ENCODE measurements at regions of chr19 and their contacts with region 1.

Region 1: GRCh38 chr19:34096020-34096915 is 76.0 kb upstream of the LSM14A start:
- DNase-seq: no peak
- H3K4me3 ChIP-seq: peak overlapping the region in 2 of 4 experiments; percentile 21 to 48; a peak in 5 of 8 replicates
- H3K27ac ChIP-seq: no peak overlapping the region
- H3K4me1 ChIP-seq: no peaks in the 10 kb centered on the region; a peak in 1 of 7 replicates
- H3K27me3 ChIP-seq: no peaks in the 10 kb centered on the region
- CTCF ChIP-seq: peak in 2 of 3 experiments; percentile 53 to 57; a peak in 2 of 4 replicates
- EP300 ChIP-seq: no peak
- POLR2A ChIP-seq: no peak
- RAD21 ChIP-seq: peak; percentile 76 to 80

Region 2: GRCh38 chr19:33785795-33786194 is 310.5 kb before region 1 on chr19:
- CTCF ChIA-PET with region 1: interaction called, 14 read pairs
- POLR2A ChIA-PET with region 1: no interaction called
- DNase-seq: no peak
- H3K4me3 ChIP-seq: no peak overlapping the region
- H3K27ac ChIP-seq: no peak overlapping the region
- H3K4me1 ChIP-seq: no peaks in the 10 kb centered on the region
- H3K27me3 ChIP-seq: peaks cover 0 to 2% (median 0%) of the 10 kb centered on the region in 4 experiments; a peak in 2 of 7 replicates
- CTCF ChIP-seq: no peak
- EP300 ChIP-seq: no peak
- POLR2A ChIP-seq: no peak
- RAD21 ChIP-seq: no peak

Region 3: DNA sequence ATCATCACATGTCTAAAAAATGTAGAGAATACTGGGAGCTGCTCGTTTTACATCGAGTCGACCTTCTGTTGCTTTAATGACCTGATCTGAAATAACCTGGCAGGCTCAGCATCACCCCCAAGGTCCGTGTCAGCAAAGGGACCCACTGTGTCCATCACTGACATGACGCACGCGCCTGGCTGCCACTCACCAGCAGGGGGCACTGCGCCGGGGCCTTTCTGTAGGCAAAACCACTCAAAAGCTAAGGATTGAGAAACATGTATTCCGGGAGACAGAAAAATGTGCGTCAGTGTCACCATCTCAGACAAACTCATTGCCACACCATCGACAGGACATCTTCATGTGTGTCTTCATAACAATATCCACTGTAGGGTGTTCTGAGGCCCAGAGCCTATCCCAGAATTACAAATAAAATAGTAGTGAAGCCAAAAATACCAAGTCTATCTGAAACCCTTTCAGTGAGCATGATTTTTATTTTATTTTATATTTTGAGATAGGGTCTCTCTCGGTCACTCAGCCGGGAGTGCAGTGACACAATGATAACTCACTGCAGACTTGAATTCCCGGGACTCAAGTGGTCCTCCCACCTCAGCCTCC is 54.2 kb before region 1 on chr19:
- CTCF ChIA-PET with region 1: interaction called, 36 read pairs
- POLR2A ChIA-PET with region 1: no interaction called
- DNase-seq: peak; percentile 25 to 95
- H3K4me3 ChIP-seq: no peak overlapping the region
- H3K27ac ChIP-seq: no peak overlapping the region
- H3K4me1 ChIP-seq: no peaks in the 10 kb centered on the region
- H3K27me3 ChIP-seq: no peaks in the 10 kb centered on the region
- CTCF ChIP-seq: peak; percentile 91 to 97 (median 91)
- EP300 ChIP-seq: no peak
- POLR2A ChIP-seq: no peak
- RAD21 ChIP-seq: peak; percentile 69 to 84

Region 4: GRCh38 chr19:34109601-34110000 is 13.3 kb after region 1 on chr19:
- CTCF ChIA-PET with region 1: interaction called, 12 read pairs
- POLR2A ChIA-PET with region 1: interaction called, 3 read pairs
- DNase-seq: no peak
- H3K4me3 ChIP-seq: no peak overlapping the region
- H3K27ac ChIP-seq: no peak overlapping the region
- H3K4me1 ChIP-seq: no peaks in the 10 kb centered on the region
- H3K27me3 ChIP-seq: no peaks in the 10 kb centered on the region
- CTCF ChIP-seq: no peak
- EP300 ChIP-seq: no peak
- POLR2A ChIP-seq: no peak
- RAD21 ChIP-seq: no peak

Region 5: DNA sequence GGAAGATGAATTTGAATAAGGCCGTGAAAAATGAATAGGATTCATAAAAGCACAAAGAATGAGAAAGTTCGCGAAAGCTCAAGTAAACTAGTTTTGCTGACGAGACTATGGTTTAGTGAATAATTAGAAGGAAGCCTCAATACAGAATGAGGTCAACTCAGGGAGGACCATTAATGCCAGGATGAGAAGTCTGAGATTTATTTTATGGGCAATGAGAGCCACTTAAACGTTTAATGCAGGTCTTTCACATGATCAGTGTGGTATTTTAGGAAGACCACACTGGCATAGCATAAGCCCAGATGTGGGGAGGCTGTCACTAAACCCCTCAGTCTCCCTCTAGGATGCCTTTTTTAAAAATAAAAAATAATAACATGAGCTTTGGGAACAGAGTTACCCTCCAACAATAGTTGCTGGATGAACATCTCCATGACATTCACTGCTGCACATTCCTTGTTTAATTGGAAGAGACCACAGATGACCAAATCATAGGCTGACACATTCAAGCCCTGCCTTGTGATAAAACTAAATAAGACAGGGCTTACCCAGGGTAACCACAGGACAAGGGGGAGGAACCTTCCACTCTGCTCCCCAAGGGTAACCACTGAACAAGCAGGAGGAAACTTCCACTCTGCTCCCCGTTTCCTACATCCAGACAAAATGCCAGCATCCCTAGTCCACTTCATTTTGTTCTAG is 32.4 kb after region 1 on chr19:
- CTCF ChIA-PET with region 1: no interaction called
- POLR2A ChIA-PET with region 1: no interaction called
- DNase-seq: no peak
- H3K4me3 ChIP-seq: no peak overlapping the region
- H3K27ac ChIP-seq: no peak overlapping the region
- H3K4me1 ChIP-seq: no peaks in the 10 kb centered on the region; a peak in 1 of 7 replicates
- H3K27me3 ChIP-seq: no peaks in the 10 kb centered on the region
- CTCF ChIP-seq: no peak
- EP300 ChIP-seq: no peak
- POLR2A ChIP-seq: no peak
- RAD21 ChIP-seq: no peak

Region 6: GRCh38 chr19:34165295-34165738 is 69.0 kb after region 1 on chr19:
- CTCF ChIA-PET with region 1: no interaction called
- POLR2A ChIA-PET with region 1: no interaction called
- DNase-seq: no peak
- H3K4me3 ChIP-seq: no peak overlapping the region
- H3K27ac ChIP-seq: no peak overlapping the region
- H3K4me1 ChIP-seq: no peaks in the 10 kb centered on the region
- H3K27me3 ChIP-seq: no peaks in the 10 kb centered on the region
- CTCF ChIP-seq: no peak
- EP300 ChIP-seq: no peak
- POLR2A ChIP-seq: no peak
- RAD21 ChIP-seq: no peak

Measured in H1 (cell line).